GM10248 (cell line): ENCODE measurements at regions of chr3 and their contacts with region 1.

Region 1: GRCh38 chr3:132034486-132035464 is at the start of gene CPNE4:
- DNase-seq: peak; percentile 85
- CTCF ChIP-seq: peak; percentile 50

Region 2: DNA sequence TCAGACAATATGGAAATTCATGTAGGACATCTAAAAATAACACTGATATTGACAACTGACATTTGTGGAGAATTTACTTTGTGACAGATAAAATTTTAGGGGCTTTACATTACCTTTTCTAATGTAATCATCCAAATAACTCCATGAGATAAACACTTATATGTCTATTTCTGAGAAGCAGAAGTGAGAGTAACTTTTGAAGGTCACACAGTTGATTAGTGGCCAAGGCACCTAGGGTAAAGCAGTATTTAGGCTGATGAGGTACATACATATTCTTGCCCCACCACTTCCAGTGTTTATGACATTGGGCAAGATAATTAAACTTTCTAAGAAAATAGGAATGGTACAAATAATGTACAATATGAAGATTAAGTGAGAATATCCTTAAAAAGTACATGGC is 248.4 kb before region 1 on chr3:
- CTCF ChIA-PET with region 1: no interaction called
- POLR2A ChIA-PET with region 1: no interaction called
- DNase-seq: no peak
- CTCF ChIP-seq: no peak

Region 3: GRCh38 chr3:131981323-131981722 is 53.5 kb before region 1 on chr3:
- CTCF ChIA-PET with region 1: no interaction called
- POLR2A ChIA-PET with region 1: no interaction called
- DNase-seq: no peak
- CTCF ChIP-seq: no peak

Region 4: DNA sequence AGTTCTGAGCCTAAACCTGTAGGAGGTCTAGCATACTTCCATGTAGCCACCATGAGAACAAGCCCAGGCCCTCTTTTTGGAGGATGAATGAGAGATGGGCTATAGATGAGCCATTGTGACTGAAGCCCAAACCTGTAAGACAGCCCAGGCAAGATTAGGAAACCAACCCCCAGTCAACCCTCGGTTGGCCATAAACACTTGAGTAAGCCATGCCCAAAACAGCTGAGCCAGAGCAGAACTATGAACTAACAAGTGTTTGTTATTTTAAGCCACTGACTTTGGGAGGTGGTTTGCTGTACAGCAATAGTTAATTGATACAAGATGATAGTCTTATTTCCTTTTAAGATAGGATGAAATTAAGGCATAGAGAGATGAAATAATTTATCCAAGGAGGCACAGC is 12.4 kb after region 1 on chr3:
- CTCF ChIA-PET with region 1: interaction called, 15 read pairs
- POLR2A ChIA-PET with region 1: no interaction called
- DNase-seq: no peak
- CTCF ChIP-seq: no peak

Region 5: DNA sequence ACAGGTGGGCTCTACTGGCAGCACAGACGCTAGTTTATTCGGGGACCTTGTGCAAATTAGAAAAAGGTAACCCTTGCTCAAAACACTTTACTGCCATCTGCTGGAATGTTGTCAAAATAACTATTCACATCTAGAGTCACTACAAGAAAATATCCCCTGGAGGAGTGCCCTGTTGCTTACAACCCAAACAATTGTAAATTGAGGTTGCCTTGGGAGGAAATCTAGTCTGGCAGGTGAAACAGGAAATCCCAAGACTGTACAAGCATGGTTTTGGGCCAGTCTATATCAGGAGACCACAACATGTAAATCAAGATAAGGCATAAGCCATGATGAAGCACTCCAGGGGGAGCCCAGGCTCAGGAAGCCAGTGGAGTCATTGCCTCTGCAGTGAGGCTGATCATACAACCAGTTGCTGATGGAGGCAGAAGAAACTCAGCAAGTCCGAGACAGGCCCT is 145.6 kb after region 1 on chr3:
- CTCF ChIA-PET with region 1: interaction called, 12 read pairs
- POLR2A ChIA-PET with region 1: no interaction called
- DNase-seq: peak; percentile 15
- CTCF ChIP-seq: peak; percentile 37

Region 6: GRCh38 chr3:132210476-132211346 is 175.9 kb after region 1 on chr3:
- CTCF ChIA-PET with region 1: interaction called, 12 read pairs
- POLR2A ChIA-PET with region 1: no interaction called
- DNase-seq: peak; percentile 15
- CTCF ChIP-seq: peak; percentile 45

Region 7: DNA sequence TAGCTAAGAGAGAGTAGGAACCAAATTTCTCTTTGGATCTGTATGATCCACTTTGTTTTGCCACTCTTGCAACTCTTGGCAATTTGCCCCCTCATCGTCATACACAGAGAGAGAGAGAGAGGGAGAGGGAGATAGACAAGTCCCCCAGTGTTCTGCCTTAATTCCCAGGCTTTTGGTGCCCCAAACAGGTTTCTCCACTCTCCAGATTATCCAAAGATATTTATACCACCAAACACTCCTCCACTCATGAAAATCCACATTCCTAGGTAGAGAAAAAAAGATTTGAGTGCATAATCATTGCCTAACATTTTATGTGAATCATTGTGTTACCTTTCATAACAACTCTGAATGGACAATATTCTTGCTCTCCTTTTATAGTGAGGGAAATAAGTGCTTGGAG is 297.7 kb after region 1 on chr3:
- CTCF ChIA-PET with region 1: no interaction called
- POLR2A ChIA-PET with region 1: no interaction called
- DNase-seq: no peak
- CTCF ChIP-seq: no peak